Head of caudate nucleus (tissue), 42 donors: ENCODE measurements at regions of chr2 and their contacts with region 1.

Region 1: DNA sequence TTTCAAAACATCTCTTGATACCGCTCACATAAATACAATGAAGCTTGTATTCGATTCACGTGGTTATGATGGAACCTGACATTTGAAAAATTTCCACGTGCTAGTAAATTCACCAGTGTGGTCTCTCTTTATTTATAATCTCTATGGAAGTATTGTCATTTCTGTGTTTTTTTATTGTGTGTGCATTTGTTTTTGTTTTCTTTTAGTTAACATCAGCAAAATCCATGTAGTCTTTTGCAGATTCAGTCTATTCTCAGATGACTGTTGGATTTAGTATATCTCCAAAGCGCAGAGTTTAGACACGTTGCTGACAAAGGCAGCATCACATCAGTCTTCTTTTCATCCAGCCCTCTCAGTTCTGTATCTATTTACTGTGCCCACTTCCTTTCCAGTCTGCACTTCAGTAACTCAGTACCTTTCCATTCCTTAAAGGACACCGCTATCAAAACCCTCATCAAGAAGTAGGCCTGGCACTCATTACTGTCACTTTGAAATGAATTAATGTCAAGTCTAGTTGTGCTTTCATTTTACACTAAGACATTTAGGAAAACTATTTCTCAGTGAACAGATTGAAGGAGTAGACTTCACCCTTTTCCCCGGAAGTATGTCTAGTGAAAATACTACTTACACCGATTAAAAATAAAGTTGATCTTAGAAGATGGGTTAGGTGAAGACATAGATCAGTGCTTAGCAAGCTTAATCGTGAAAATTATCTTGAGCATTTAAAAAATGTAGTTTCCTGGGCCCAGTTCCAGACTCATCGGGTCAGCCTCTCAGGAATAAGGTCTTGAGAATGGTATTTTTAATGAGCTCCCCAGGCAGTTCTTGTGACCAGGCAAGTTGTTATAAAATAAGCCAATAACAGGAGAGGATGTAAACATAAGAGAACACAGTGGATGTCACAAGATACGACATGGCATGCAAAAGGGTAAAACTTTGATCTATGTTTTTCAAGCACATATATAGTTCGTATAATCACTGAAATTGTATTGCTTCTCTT is 506.8 kb upstream of the ZEB2 start:
- DNase-seq: no peak

Region 2: DNA sequence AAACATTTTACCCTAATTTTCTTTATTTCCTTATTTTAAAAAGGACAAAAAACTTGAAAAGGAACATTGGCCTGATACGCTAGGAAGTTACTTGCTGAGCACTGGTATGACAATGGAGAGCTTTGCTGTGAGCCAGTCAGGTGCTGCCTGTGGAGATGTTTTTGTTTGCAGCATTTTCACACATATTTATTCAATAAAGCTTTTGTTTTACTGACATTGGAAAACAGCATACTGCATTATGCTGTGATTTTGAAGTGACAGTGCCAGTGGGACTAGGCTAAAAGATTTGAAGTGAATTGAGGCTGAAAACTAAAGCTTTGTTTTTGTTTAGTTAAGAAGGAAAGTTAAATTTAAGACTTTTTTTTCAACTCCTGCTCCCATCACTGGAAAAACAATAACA is 36.1 kb before region 1 on chr2:
- intact Hi-C with region 1: loop called (anchors 5 kb)
- DNase-seq: peak in 30 of 42 donors; percentile 12 to 73 (median 42)